ENCODE measurements at regions of chr2 and their contacts with region 1.

Region 1: GRCh38 chr2:234288974-234289455 is 207.9 kb downstream of the ARL4C start:
- DNase-seq: peak; percentile 76 to 83 (median 82)
- H3K4me3 ChIP-seq: peak overlapping the region in 1 of 2 donors; percentile 23
- H3K4me3 Mint-ChIP-seq: peak overlapping the region in 4 of 8 donors; percentile 46 to 85 (median 70)
- H3K27ac ChIP-seq: peak overlapping the region; percentile 97
- H3K27ac Mint-ChIP-seq: peak overlapping the region; percentile 93 to 100 (median 100)
- H3K4me1 ChIP-seq: peaks cover 56% of the 10 kb centered on the region
- H3K4me1 Mint-ChIP-seq: peaks cover 50 to 65% (median 58%) of the 10 kb centered on the region in 4 donors
- H3K27me3 ChIP-seq: no peaks in the 10 kb centered on the region
- H3K27me3 Mint-ChIP-seq: no peaks in the 10 kb centered on the region

Region 2: GRCh38 chr2:233990261-233990798 is 298.7 kb before region 1 on chr2:
- CTCF ChIA-PET with region 1: interaction called, 8 read pairs
- POLR2A ChIA-PET with region 1: interaction called, 18 read pairs
- intact Hi-C with region 1: no loop called
- DNase-seq: peak; percentile 82 to 90 (median 87)
- H3K4me3 ChIP-seq: peak overlapping the region in 1 of 2 donors; percentile 16
- H3K4me3 Mint-ChIP-seq: peak overlapping the region in 7 of 8 donors; percentile 57 to 84 (median 64)
- H3K27ac ChIP-seq: peak overlapping the region; percentile 32
- H3K27ac Mint-ChIP-seq: peak overlapping the region; percentile 21 to 96 (median 87)
- H3K4me1 ChIP-seq: peaks cover 65% of the 10 kb centered on the region
- H3K4me1 Mint-ChIP-seq: peaks cover 47 to 70% (median 60%) of the 10 kb centered on the region in 4 donors
- H3K27me3 ChIP-seq: no peaks in the 10 kb centered on the region
- H3K27me3 Mint-ChIP-seq: no peaks in the 10 kb centered on the region

Region 3: GRCh38 chr2:234051374-234052070 is 237.5 kb before region 1 on chr2:
- CTCF ChIA-PET with region 1: no interaction called
- POLR2A ChIA-PET with region 1: no interaction called
- intact Hi-C with region 1: no loop called
- DNase-seq: no peak
- H3K4me3 ChIP-seq: no peak overlapping the region
- H3K4me3 Mint-ChIP-seq: no peak overlapping the region
- H3K27ac ChIP-seq: no peak overlapping the region
- H3K27ac Mint-ChIP-seq: peak overlapping the region in 1 of 7 donors; percentile 11
- H3K4me1 ChIP-seq: no peaks in the 10 kb centered on the region
- H3K4me1 Mint-ChIP-seq: peaks cover 0 to 12% (median 12%) of the 10 kb centered on the region in 4 donors
- H3K27me3 ChIP-seq: no peaks in the 10 kb centered on the region
- H3K27me3 Mint-ChIP-seq: no peaks in the 10 kb centered on the region

Region 4: DNA sequence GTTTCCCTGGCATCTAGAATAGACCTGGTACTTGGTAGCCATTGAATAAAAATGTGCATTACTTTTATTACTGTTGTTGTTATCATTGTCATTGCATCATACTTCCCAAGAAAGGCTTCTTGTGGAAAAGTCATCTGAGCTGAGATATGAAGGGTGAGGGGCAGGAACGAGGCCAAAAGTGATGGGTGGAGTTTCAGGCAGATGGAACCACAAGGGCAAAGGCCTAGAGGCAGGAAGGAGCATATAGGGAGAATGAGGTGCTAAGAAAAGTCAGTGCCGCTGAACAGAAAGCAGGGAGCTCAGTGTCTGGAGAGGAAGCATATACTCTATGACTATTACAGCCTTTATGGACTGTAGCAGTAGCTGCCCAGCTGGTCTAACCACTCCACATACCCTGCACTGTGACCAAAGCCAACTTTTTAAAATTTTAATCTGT is 19.2 kb before region 1 on chr2:
- CTCF ChIA-PET with region 1: interaction called, 11 read pairs
- POLR2A ChIA-PET with region 1: interaction called, 12 read pairs
- intact Hi-C with region 1: loop called (anchors 2 kb)
- DNase-seq: no peak
- H3K4me3 ChIP-seq: no peak overlapping the region
- H3K4me3 Mint-ChIP-seq: no peak overlapping the region
- H3K27ac ChIP-seq: no peak overlapping the region
- H3K27ac Mint-ChIP-seq: peak overlapping the region in 3 of 7 donors; percentile 0 to 69 (median 48)
- H3K4me1 ChIP-seq: peaks cover 40% of the 10 kb centered on the region
- H3K4me1 Mint-ChIP-seq: peaks cover 34 to 62% (median 39%) of the 10 kb centered on the region in 4 donors
- H3K27me3 ChIP-seq: no peaks in the 10 kb centered on the region
- H3K27me3 Mint-ChIP-seq: no peaks in the 10 kb centered on the region

Region 5: GRCh38 chr2:234335661-234336228 is 46.7 kb after region 1 on chr2:
- CTCF ChIA-PET with region 1: interaction called, 4 read pairs
- POLR2A ChIA-PET with region 1: interaction called, 23 read pairs
- intact Hi-C with region 1: no loop called
- DNase-seq: peak; percentile 56 to 85 (median 64)
- H3K4me3 ChIP-seq: no peak overlapping the region
- H3K4me3 Mint-ChIP-seq: peak overlapping the region; percentile 21 to 81 (median 74)
- H3K27ac ChIP-seq: peak overlapping the region; percentile 42
- H3K27ac Mint-ChIP-seq: peak overlapping the region; percentile 84 to 98 (median 93)
- H3K4me1 ChIP-seq: peaks cover 10% of the 10 kb centered on the region
- H3K4me1 Mint-ChIP-seq: peaks cover 17 to 45% (median 32%) of the 10 kb centered on the region in 4 donors
- H3K27me3 ChIP-seq: no peaks in the 10 kb centered on the region
- H3K27me3 Mint-ChIP-seq: no peaks in the 10 kb centered on the region

Region 6: GRCh38 chr2:234425619-234426603 is 136.9 kb after region 1 on chr2:
- CTCF ChIA-PET with region 1: interaction called, 85 read pairs
- POLR2A ChIA-PET with region 1: interaction called, 313 read pairs
- intact Hi-C with region 1: loop called (anchors 1 kb)
- DNase-seq: peak; percentile 90 to 95 (median 91)
- H3K4me3 ChIP-seq: peak overlapping the region; percentile 19 to 33
- H3K4me3 Mint-ChIP-seq: peak overlapping the region; percentile 70 to 90 (median 82)
- H3K27ac ChIP-seq: peak overlapping the region; percentile 88
- H3K27ac Mint-ChIP-seq: peak overlapping the region; percentile 95 to 100 (median 100)
- H3K4me1 ChIP-seq: peaks cover 100% of the 10 kb centered on the region
- H3K4me1 Mint-ChIP-seq: peaks cover 66 to 96% (median 82%) of the 10 kb centered on the region in 4 donors
- H3K27me3 ChIP-seq: no peaks in the 10 kb centered on the region
- H3K27me3 Mint-ChIP-seq: no peaks in the 10 kb centered on the region

Region 7: DNA sequence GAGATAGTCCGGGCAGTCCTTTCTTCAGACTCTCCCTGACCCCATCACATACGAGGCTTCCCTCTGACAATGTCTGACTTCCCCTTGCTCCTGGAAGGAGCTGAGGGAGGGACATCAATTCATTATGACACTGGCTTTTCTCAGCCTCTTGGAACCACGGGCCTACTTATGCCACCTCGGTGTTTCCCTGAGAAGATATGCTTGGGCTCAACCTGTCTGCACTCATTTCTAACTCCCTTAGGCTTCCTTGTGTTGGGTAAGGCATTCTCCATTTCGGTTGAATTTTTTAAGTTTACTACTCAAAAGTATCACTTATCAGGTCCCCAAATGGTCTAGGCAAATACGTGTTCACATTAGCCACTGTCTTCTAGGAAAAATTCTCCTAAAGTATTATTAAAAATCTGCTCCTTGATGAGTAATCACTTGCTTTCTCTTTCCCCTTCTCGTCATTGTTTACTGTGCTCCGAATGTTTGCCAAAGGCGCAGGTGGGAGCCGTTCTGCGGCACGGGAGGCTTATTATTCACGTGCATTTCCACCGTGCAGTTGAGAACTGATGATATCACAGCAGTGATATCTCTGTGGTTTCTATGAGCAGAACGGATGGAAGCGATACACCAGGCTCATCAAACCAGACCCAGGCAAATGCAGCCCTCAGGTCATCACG is 174.7 kb after region 1 on chr2:
- CTCF ChIA-PET with region 1: interaction called, 22 read pairs
- POLR2A ChIA-PET with region 1: interaction called, 392 read pairs
- intact Hi-C with region 1: no loop called
- DNase-seq: peak; percentile 83 to 90 (median 87)
- H3K4me3 ChIP-seq: peak overlapping the region; percentile 12 to 48
- H3K4me3 Mint-ChIP-seq: peak overlapping the region; percentile 69 to 86 (median 81)
- H3K27ac ChIP-seq: peak overlapping the region; percentile 86
- H3K27ac Mint-ChIP-seq: peak overlapping the region; percentile 88 to 99 (median 97)
- H3K4me1 ChIP-seq: peaks cover 81% of the 10 kb centered on the region
- H3K4me1 Mint-ChIP-seq: peaks cover 49 to 94% (median 73%) of the 10 kb centered on the region in 4 donors
- H3K27me3 ChIP-seq: no peaks in the 10 kb centered on the region
- H3K27me3 Mint-ChIP-seq: no peaks in the 10 kb centered on the region

Region 8: GRCh38 chr2:234500394-234501006 is 211.5 kb after region 1 on chr2:
- CTCF ChIA-PET with region 1: interaction called, 163 read pairs
- POLR2A ChIA-PET with region 1: interaction called, 471 read pairs
- intact Hi-C with region 1: loop called (anchors 1 kb)
- DNase-seq: peak; percentile 73 to 85 (median 78)
- H3K4me3 ChIP-seq: peak overlapping the region in 1 of 2 donors; percentile 9
- H3K4me3 Mint-ChIP-seq: peak overlapping the region; percentile 57 to 91 (median 83)
- H3K27ac ChIP-seq: peak overlapping the region; percentile 77
- H3K27ac Mint-ChIP-seq: peak overlapping the region; percentile 81 to 97 (median 94)
- H3K4me1 ChIP-seq: peaks cover 32% of the 10 kb centered on the region
- H3K4me1 Mint-ChIP-seq: peaks cover 26 to 41% (median 30%) of the 10 kb centered on the region in 4 donors
- H3K27me3 ChIP-seq: no peaks in the 10 kb centered on the region
- H3K27me3 Mint-ChIP-seq: no peaks in the 10 kb centered on the region